ENCODE measurements at regions of chr17 and their contacts with region 1.

Region 1: DNA sequence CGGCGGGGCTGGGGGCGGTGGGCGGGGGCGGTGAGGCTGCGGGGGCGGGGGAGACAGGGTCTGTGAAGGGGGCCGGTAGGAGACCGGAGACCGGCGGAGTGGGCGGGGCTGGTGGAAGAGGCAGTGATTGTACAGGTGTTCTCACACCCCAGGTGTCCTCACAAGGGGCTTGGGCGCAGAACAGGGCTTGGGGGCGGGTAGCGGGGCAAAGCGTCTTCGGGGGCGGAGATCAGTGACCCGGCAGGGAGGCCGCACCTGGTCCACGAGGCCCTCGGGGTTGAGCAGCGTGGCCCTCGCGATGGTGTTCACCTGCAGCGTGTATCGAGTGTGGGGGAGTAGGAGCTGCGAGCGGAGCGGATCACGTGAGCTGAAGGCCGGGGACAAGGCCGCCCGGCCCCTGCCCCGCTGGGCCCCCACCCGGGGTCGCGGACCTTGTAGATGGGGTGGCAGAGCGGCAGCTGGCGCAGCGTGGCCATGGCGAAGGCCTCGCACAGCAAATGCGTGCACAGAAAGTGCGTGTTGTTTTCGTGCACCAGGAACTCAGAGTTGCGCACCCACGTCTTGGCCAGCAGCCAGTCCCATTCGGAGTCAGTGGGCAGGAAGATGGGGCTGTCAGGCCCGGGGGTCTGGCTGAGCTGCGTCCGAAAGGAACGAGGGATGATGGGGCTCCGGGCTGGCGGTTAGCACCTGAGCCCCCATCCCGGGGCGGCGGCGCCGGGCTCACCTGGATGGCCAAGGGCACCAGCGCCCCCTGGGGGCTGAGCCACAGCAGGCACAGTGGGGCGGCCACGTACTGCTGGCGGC is 8.5 kb downstream of the ALOXE3 start:
- DNase-seq: peak; percentile 73 to 81 (median 78)
- ATAC-seq: peak; percentile 95
- H3K4me3 ChIP-seq: peak overlapping the region; percentile 38
- H3K27ac ChIP-seq: no peak overlapping the region
- H3K4me1 ChIP-seq: peaks cover 10 to 19% of the 10 kb centered on the region in 2 experiments; a peak in 4 of 5 replicates
- H3K27me3 ChIP-seq: peaks cover 3 to 10% of the 10 kb centered on the region in 2 experiments; a peak in 3 of 5 replicates
- CTCF ChIP-seq: peak; percentile 77 to 90 (median 84)
- EP300 ChIP-seq: no peak
- POLR2A ChIP-seq: no peak
- RAD21 ChIP-seq: peak; percentile 68 to 86

Region 2: DNA sequence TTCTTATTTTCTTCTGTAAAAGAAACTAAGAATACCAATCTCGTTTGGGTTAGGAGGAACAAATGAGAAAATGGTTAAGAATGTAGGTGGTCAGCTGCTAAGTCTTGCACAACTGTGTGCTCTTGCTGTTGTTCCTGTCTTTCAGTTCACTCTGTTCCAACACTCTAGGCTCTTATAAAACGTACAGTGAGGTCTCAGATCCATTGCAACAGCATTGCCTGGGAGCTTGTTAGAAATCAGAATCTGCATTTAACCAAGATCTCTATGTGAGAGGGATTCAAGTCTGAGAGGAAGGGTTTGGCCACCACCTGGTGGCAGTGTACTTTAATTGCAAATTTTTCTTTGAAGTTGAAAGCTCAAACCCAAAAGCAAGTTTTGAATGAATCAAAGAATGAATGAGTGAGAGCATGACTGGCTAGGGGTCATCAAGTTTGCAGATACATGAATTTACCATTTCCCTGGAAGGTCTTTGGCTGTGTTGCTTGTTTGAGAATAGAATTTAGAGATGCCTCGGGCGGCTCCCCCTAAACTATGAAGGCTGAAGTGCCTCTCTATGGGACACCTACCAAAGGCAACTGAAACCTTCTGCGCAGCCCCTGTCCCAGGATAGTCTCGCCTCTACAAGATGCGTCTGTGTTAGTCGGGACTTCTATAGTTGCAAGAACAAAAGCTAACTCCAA is 68.5 kb before region 1 on chr17:
- CTCF ChIA-PET with region 1: no interaction called
- POLR2A ChIA-PET with region 1: no interaction called
- in situ Hi-C with region 1: no loop called
- intact Hi-C with region 1: no loop called
- DNase-seq: peak; percentile 30 to 60 (median 38)
- ATAC-seq: peak; percentile 57; the same call in 2 of the 3 replicates
- H3K4me3 ChIP-seq: no peak overlapping the region
- H3K27ac ChIP-seq: no peak overlapping the region
- H3K4me1 ChIP-seq: peaks cover 0 to 6% of the 10 kb centered on the region in 2 experiments; a peak in 3 of 5 replicates
- H3K27me3 ChIP-seq: peaks cover 11 to 30% of the 10 kb centered on the region in 2 experiments; a peak in 4 of 5 replicates
- CTCF ChIP-seq: peak; percentile 45 to 65 (median 47); a peak in 4 of 6 replicates
- EP300 ChIP-seq: no peak
- POLR2A ChIP-seq: no peak
- RAD21 ChIP-seq: peak; percentile 45 to 72

Region 3: DNA sequence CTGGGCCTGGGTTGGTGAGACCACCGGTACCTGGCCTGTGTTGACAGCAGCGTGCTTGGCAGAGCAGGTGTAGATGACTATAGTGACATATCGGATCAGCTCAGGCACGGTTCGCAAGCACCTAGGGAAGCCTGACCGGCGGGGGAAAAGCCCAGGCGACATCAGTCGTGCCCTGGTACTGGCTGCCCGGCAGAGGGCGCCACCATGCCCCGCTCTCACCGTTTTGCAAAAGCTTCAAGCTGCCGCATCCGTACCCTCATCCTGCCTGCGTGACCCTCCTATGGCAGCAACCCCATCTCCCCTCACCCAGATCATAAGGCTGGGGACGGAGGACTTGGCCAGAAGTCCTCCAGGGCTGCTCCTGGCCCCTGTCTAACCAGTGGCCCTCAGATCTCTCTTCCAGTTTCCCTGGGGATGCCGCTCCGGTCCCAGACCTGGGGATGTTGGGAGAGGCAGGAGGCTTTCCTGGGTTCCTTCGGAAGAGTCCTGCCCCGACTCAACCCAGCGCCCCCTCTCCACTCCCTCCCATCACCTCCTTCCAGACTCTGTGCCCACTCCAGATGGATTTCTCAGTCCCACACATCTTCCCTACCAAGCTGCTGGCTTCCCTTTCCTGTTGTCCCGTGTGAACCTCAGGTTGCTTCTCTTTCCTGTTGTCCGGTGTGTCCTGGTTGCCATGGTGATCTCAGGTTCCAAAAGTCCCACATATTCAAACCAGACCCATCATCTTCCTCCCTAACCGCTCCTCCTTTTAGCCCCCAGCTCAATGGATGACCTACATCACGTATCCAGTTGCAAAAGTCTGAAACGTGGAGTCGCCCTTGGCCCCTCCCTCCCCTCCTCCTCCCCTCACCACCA is 36.0 kb before region 1 on chr17:
- CTCF ChIA-PET with region 1: no interaction called
- POLR2A ChIA-PET with region 1: interaction called, 4 read pairs
- in situ Hi-C with region 1: loop called (anchors 5 kb)
- intact Hi-C with region 1: loop called (anchors 5 kb)
- DNase-seq: peak; percentile 68 to 76 (median 70)
- ATAC-seq: peak; percentile 92
- H3K4me3 ChIP-seq: no peak overlapping the region
- H3K27ac ChIP-seq: no peak overlapping the region
- H3K4me1 ChIP-seq: peaks cover 5 to 22% of the 10 kb centered on the region in 2 experiments; a peak in 3 of 5 replicates
- H3K27me3 ChIP-seq: peaks cover 0 to 25% of the 10 kb centered on the region in 2 experiments; a peak in 3 of 5 replicates
- CTCF ChIP-seq: peak; percentile 74 to 84 (median 76)
- EP300 ChIP-seq: no peak
- POLR2A ChIP-seq: no peak
- RAD21 ChIP-seq: peak in 1 of 2 experiments; percentile 58; a peak in 3 of 4 replicates

Region 4: DNA sequence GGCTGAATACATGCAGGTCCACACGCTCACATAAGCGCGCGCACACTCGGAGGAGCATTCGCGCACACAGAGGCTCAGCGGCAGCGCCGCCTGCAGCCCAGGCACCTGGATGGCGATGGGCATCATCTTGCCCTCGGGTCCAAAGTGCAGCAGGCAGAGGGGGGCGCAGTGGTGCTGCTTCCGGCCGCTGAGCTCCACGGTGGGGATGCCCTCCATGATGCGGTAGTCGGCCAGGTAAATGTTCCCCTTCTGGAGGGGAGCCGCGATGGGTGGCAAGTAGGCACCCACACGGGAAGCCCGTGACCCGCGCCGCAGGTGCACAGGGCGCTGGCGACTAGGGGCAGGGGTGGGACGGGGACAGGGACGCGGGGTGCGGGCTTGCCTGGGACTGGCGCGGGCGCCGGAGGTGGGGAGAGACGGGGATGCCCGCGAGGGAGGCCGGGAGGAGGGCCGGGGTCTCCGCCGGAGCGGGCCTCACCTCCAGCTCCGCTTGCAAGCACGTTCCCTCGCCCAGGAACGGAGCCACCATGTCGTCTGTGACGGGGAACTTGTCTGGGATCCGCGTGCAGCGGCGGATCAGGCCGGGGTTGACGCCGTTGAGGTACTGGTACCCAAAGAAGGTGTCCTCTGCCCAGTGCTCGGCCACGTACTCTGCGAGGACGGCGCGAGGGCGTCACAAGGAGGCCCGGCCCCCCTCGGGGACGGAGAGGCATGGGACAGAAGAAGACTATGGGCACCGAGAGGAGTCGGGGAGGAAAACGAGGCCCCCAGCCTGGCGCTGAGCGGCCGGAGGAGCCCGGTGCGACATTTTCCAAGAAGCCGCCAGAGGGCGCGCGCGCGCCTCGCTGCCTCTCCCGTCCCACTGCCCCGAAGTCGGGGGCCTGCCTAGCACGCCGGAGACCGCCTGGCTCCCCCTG is 30.3 kb before region 1 on chr17:
- CTCF ChIA-PET with region 1: interaction called, 24 read pairs
- POLR2A ChIA-PET with region 1: interaction called, 3 read pairs
- in situ Hi-C with region 1: loop called (anchors 5 kb)
- intact Hi-C with region 1: loop called (anchors 5 kb)
- DNase-seq: peak; percentile 74 to 77 (median 76)
- ATAC-seq: peak; percentile 96
- H3K4me3 ChIP-seq: peak overlapping the region; percentile 12; the same call in 1 of the 2 replicates
- H3K27ac ChIP-seq: no peak overlapping the region
- H3K4me1 ChIP-seq: peaks cover 10 to 22% of the 10 kb centered on the region in 2 experiments; a peak in 4 of 5 replicates
- H3K27me3 ChIP-seq: peaks cover 0 to 8% of the 10 kb centered on the region in 2 experiments; a peak in 3 of 5 replicates
- CTCF ChIP-seq: peak; percentile 70 to 86 (median 74)
- EP300 ChIP-seq: no peak
- POLR2A ChIP-seq: no peak
- RAD21 ChIP-seq: peak; percentile 51 to 83

Region 5: DNA sequence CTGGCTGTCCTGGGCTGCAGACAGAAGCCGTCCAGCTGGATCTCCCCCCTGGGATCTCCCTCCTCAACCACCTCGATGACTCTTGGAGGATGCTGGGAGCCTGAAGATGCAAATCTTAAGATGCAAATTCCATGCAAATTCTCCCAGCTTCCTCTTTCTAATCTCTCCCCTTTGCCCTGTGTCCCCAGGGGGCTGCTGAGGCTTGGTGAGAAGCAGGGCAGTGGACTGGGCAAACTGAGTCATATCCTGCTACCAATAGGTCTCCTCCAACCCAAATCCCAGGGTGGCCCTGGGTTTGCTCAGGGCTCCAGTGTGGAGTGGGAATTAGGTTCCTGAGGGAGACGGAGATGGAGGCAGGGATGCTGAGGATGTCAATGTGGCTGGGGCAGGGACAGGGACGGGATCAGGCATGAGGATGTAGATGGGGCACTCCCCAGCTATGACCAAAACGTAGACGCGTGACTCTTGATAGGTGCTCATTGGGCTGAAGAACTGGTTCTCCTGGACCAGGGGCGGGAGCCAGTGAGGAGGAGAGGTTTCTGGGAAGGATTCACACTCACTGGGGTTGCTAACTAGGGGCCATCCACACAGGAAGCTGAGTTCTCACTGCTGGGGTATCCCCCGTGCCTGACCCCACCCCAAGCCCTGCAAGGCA is 18.7 kb before region 1 on chr17:
- CTCF ChIA-PET with region 1: interaction called, 4 read pairs
- POLR2A ChIA-PET with region 1: no interaction called
- in situ Hi-C with region 1: no loop called
- intact Hi-C with region 1: loop called (anchors 1 kb)
- DNase-seq: no peak
- ATAC-seq: no peak
- H3K4me3 ChIP-seq: no peak overlapping the region
- H3K27ac ChIP-seq: no peak overlapping the region
- H3K4me1 ChIP-seq: peaks cover 0 to 6% of the 10 kb centered on the region in 2 experiments; a peak in 2 of 5 replicates
- H3K27me3 ChIP-seq: peaks cover 3 to 26% of the 10 kb centered on the region in 2 experiments; a peak in 2 of 5 replicates
- CTCF ChIP-seq: no peak
- EP300 ChIP-seq: no peak
- POLR2A ChIP-seq: no peak
- RAD21 ChIP-seq: no peak

Region 6: DNA sequence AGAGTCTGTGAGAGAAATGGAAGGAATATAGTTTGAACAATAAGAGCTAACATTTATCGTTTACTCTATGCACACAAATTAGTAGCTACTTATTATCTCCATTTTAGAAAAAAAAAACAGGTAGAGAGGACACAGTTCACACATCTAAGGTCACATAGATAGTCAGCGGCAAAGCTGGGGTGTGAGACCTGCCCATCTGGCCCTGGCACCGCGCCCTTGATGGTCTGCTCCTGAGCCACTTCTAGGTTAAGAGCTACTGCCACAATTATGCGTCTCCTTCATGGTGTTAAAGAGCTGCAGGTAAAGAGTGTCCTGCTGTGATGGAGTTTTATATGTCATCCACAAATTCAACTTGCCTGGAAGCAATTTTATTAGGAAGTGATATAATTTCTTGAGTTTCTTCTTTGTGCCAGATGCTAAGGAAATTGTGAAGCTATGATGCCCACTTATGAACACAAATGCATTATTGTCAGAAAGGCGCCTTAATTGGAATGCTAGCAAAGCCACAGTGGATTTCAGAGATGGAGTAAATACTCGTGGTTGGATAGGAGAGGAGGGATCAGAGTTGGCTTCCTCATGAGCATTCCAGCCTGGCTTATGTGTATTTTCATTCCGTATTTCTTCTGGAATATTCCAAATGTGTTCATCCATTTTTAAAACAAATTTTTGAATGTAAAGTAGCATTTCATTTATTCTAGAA is 710.6 kb after region 1 on chr17:
- CTCF ChIA-PET with region 1: no interaction called
- POLR2A ChIA-PET with region 1: no interaction called
- in situ Hi-C with region 1: no loop called
- intact Hi-C with region 1: no loop called
- DNase-seq: no peak
- ATAC-seq: no peak
- H3K4me3 ChIP-seq: no peak overlapping the region
- H3K27ac ChIP-seq: no peak overlapping the region
- H3K4me1 ChIP-seq: no peaks in the 10 kb centered on the region
- H3K27me3 ChIP-seq: no peaks in the 10 kb centered on the region; a peak in 1 of 5 replicates
- CTCF ChIP-seq: no peak
- EP300 ChIP-seq: no peak
- POLR2A ChIP-seq: no peak
- RAD21 ChIP-seq: no peak